ENCODE measurements at regions of chr6 and their contacts with region 1.

Region 1: GRCh38 chr6:33700391-33701050 is 11.0 kb downstream of the UQCC2 start:
- DNase-seq: peak; percentile 57 to 77
- ATAC-seq: peak; percentile 82 to 90
- H3K4me3 ChIP-seq: no peak overlapping the region
- H3K27ac ChIP-seq: peak overlapping the region in 1 of 2 experiments; percentile 46; a peak in 1 of 6 replicates
- H3K4me1 ChIP-seq: peaks cover 15% of the 10 kb centered on the region
- CTCF ChIP-seq: peak; percentile 67
- EP300 ChIP-seq: no peak
- POLR2A ChIP-seq: no peak
- RAD21 ChIP-seq: peak; percentile 62 to 65

Region 2: DNA sequence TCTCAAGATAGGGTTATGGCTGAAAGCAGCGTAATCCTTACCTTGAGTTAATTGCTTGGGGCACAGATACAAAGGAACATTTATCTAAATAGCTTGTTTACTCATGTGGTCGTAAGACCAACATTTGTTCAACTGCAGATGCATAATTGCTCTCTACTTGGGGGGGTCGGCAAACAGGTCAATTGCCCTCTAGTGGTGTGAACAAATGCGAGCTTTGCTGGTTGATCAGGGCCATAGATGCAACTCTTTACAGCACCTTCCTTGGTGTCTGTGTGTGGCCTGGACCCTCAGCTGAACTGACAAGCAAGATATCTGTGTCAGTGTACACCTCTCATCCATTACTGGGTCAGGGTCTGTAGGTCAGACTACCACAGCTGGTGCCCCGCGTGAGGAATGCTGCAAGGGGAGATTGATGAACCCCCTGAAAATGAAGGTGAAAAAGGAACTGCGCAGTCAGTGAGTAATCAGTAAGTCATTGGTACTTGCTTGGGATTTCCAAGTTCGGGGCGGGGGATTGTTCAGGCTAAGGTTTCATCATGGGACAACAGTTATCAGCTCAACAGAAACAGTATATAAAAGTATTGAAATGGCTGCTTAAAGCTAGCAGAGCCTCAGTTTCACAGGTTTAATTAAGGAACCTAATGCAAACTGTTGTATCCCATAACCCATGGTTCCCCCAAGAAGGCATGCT is 651.1 kb before region 1 on chr6:
- CTCF ChIA-PET with region 1: no interaction called
- POLR2A ChIA-PET with region 1: no interaction called
- DNase-seq: no peak
- ATAC-seq: no peak
- H3K4me3 ChIP-seq: no peak overlapping the region
- H3K27ac ChIP-seq: no peak overlapping the region
- H3K4me1 ChIP-seq: no peaks in the 10 kb centered on the region
- CTCF ChIP-seq: no peak
- EP300 ChIP-seq: no peak
- POLR2A ChIP-seq: no peak
- RAD21 ChIP-seq: no peak

Region 3: GRCh38 chr6:33579828-33580714 is 120.5 kb before region 1 on chr6 and contains the start of gene BAK1:
- CTCF ChIA-PET with region 1: interaction called, 177 read pairs
- POLR2A ChIA-PET with region 1: no interaction called
- DNase-seq: peak; percentile 88 to 93
- ATAC-seq: peak; percentile 97 to 98
- H3K4me3 ChIP-seq: peak within 1 kb of the TSS; percentile 84
- H3K27ac ChIP-seq: peak within 1 kb of the TSS; percentile 85 to 96
- H3K4me1 ChIP-seq: peaks cover 23% of the 10 kb centered on the region
- CTCF ChIP-seq: peak; percentile 31; the same call in 2 of the 3 replicates
- EP300 ChIP-seq: no peak
- POLR2A ChIP-seq: peak; percentile 59
- RAD21 ChIP-seq: 0 out of 5 replicates have a peak, but pooled peaks of 1 of the 2 experiments have one; percentile 21
- polyA plus RNA-seq, gene BAK1: 11.9 and 12.6 TPM in 2 replicates

Region 4: DNA sequence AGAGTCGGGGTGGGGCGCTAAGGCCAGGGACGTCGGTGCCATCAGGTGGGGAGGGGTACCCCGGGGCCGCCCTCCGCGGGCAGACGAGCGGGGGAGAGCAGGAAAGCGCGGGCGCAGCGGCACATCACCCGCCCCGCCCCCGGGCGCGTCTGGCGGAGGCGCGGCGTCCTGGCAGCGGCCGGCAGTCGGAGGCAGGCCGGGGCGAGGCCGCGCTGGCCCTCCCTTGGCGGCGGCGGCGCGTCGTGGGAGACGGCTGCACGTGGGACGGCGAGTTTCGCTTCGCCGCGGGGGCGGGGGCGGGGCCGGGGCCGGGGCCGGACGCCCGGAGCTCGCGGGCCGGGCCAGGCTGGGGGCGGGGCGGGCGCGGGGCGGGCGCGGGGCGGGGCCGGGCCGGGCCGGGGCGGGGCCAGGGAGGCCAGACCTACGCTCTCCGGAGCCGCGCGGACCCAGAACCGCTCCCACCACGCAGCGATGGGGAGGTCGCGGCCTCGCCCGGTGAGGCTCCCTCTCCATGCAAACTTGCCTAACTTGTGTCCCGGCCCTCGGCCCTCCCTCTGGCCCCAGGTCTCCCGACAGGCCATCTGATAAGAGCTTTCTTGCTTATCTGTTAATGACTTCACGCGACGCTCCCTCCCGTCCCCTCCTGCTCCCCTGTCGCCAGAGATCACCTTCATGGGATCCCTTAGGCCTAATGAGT is 66.9 kb before region 1 on chr6:
- CTCF ChIA-PET with region 1: interaction called, 12 read pairs
- POLR2A ChIA-PET with region 1: no interaction called
- DNase-seq: peak; percentile 33 to 35
- ATAC-seq: peak; percentile 83 to 88
- H3K4me3 ChIP-seq: peak overlapping the region; percentile 46
- H3K27ac ChIP-seq: peak overlapping the region; percentile 54 to 92
- H3K4me1 ChIP-seq: peaks cover 33% of the 10 kb centered on the region
- CTCF ChIP-seq: no peak
- EP300 ChIP-seq: no peak
- POLR2A ChIP-seq: no peak
- RAD21 ChIP-seq: no peak

Region 5: GRCh38 chr6:33683051-33683571 is 17.4 kb before region 1 on chr6:
- CTCF ChIA-PET with region 1: interaction called, 19 read pairs
- POLR2A ChIA-PET with region 1: no interaction called
- DNase-seq: no peak
- ATAC-seq: no peak
- H3K4me3 ChIP-seq: no peak overlapping the region
- H3K27ac ChIP-seq: no peak overlapping the region
- H3K4me1 ChIP-seq: peaks cover 2% of the 10 kb centered on the region; the same call in 1 of the 3 replicates
- CTCF ChIP-seq: no peak
- EP300 ChIP-seq: no peak
- POLR2A ChIP-seq: no peak
- RAD21 ChIP-seq: no peak

Region 6: DNA sequence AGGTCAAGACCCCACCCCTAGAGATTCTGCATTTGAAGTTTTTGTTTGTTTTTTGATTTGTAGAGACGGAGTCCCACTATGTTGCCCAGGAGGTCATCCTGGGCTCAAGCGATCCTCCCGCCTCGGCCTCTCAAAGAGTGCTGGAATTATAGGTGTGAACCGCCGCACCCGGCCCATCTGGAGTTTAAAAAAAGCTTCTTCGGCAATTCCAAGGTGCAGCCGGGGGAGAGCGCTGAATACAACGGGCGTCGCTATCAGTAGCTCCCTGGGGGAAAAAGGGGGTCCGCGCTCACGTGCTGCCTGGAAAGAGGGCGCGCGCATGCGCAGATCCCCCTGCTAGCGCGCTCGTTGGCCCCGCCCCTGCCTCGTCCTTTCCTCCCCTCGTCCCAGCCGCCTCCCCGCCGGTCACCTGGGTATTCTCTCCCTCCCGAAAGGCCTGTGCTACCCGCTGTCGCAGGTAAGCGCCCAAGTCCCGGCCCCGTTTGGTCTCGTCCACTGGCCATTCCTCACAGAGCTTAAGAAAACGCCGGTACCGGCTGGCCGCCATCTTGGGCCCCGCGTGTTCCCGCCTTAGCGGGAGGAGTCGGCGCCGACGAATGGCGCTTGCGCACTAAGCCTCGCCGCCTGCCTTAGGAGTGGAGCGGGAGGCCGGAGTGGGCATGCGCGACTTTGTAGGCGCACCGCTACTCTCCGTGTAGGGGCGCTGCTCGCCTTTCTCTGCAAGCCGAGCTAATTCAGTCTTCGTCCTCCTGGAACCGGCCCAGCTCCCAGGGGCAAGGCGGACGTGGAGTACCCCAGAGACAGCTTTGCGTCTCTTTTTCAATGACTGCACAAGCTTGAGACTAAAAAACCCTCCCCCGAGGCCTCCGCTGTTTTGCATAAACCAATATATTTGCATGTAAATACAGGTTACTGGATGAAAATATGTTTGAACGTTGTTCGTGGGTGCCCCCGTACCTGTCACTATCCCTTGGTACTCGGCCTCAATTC is 10.9 kb after region 1 on chr6 and contains the start of gene UQCC2:
- CTCF ChIA-PET with region 1: interaction called, 12 read pairs
- POLR2A ChIA-PET with region 1: interaction called, 6 read pairs
- DNase-seq: peak; percentile 87 to 95
- ATAC-seq: peak; percentile 88 to 97
- H3K4me3 ChIP-seq: peak within 1 kb of the TSS; percentile 73
- H3K27ac ChIP-seq: peak within 1 kb of the TSS; percentile 98 to 99
- H3K4me1 ChIP-seq: peaks cover 10% of the 10 kb centered on the region; the same call in 2 of the 3 replicates
- CTCF ChIP-seq: peak; percentile 64
- EP300 ChIP-seq: no peak
- POLR2A ChIP-seq: peak; percentile 50
- RAD21 ChIP-seq: peak; percentile 70
- polyA plus RNA-seq, gene UQCC2: 65.5 and 90.8 TPM in 2 replicates